ENCODE measurements at regions of chr2 and their contacts with region 1.

Region 1: DNA sequence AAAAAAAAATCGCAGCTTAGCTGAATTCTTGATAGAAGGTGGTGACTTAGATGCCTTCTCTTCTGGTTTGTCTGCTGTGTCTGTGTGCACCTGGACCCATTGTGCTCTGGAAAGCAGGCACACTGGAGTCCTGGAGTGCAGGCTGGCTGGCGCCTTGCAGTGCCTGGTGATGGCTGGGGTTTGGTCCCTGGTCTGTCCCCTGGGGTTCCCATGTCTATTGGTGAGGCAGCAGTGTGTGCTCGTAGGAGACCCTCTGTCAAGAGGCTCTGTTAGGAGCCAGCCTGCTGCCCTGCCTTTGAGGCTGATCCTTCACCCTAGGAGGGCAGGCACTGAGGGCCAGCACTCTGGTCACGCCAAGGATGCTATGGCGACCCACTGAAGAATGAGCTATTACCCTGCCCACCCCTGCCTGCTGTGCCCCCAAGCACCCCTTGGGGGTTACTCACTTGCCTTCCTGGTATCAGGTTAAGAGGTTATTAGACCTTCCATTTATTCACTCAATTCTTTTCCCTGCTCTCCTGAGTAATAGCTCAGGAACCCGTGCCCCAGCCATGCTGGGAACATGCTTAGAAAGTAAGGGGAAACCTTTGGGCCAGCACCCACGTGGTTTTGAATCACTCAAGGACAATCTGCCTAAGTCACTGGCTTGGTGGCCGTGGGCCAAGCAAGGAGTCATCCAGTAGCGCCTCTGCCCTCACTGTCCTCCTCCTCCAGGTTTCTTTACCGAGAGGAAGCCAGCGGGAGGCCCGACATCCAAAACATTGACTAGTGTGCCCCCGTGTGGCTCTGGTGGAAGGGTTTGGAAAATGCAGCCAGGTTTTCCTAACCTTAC is 284.5 kb downstream of the PRKCE start:
- DNase-seq: peak; percentile 99
- ATAC-seq: peak; percentile 62
- H3K4me3 ChIP-seq: no peak overlapping the region
- H3K27ac ChIP-seq: peak overlapping the region; percentile 67
- H3K4me1 ChIP-seq: peaks cover 42% of the 10 kb centered on the region
- H3K27me3 ChIP-seq: no peaks in the 10 kb centered on the region
- CTCF ChIP-seq: peak; percentile 87

Region 2: GRCh38 chr2:45177870-45178269 is 758.1 kb before region 1 on chr2:
- CTCF ChIA-PET with region 1: interaction called, 12 read pairs
- POLR2A ChIA-PET with region 1: no interaction called
- intact Hi-C with region 1: no loop called
- DNase-seq: peak; percentile 94
- ATAC-seq: 0 out of 2 replicates have a peak, but pooled peaks have one; percentile 8
- H3K4me3 ChIP-seq: no peak overlapping the region
- H3K27ac ChIP-seq: peak overlapping the region; percentile 95
- H3K4me1 ChIP-seq: peaks cover 54% of the 10 kb centered on the region
- H3K27me3 ChIP-seq: no peaks in the 10 kb centered on the region
- CTCF ChIP-seq: no peak

Region 3: DNA sequence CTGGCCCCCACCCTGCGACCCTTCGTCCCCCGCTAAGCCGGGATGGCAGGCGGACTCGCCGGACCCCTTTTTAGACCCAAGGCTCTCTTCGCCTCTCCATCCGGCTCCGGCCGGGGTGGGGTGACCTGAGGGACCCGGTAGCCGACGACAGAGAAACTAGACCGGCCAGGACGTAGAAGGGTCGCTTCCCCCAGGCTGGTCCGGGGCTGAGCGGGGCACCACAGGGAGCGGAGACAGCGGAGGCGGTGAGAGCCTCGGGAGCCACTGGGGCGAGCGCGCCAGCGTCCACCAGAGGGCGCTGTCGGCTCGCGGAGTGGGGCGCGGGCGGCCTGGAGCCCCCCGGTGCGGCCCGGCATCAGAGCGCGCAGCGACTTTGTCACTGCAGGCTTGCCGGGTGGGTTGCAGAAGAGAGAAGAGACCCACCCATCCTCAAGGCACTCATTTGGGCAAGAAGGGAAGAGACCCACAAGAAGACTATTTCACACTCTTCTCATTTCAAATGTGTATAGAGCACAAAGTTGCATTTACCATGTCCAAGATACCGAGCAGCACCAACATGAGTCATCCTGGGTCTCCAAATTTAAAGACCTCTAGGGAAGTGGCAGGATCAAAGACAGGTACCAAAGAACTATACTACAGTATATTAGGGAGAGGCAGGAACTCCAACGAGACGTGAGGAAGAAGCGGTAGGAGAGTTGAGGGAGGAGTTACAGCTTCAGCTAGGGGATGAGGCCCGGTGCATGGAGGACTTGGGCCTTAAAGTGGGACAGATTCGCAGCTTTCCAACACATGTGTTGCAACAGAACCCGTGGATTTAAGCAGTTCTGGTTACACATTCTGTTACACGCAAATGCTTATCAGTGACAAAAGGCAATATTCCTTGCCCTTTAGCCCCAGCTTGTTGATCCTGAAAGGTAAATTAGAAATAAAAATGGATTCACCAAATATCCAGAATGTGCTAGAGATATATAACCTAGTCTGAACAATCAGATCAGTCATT is 292.2 kb before region 1 on chr2:
- CTCF ChIA-PET with region 1: no interaction called
- POLR2A ChIA-PET with region 1: no interaction called
- intact Hi-C with region 1: loop called (anchors 1 kb)
- DNase-seq: peak; percentile 84
- ATAC-seq: peak; percentile 99
- H3K4me3 ChIP-seq: peak overlapping the region; percentile 80
- H3K27ac ChIP-seq: no peak overlapping the region
- H3K4me1 ChIP-seq: 0 out of 2 replicates have a peak, but pooled peaks cover 4% of the 10 kb centered on the region
- H3K27me3 ChIP-seq: no peaks in the 10 kb centered on the region
- CTCF ChIP-seq: peak; percentile 95

Region 4: GRCh38 chr2:45778720-45779171 is 157.3 kb before region 1 on chr2:
- CTCF ChIA-PET with region 1: interaction called, 10 read pairs
- POLR2A ChIA-PET with region 1: no interaction called
- intact Hi-C with region 1: loop called (anchors 1 kb)
- DNase-seq: peak; percentile 89
- ATAC-seq: peak; percentile 92
- H3K4me3 ChIP-seq: no peak overlapping the region
- H3K27ac ChIP-seq: no peak overlapping the region
- H3K4me1 ChIP-seq: no peaks in the 10 kb centered on the region
- H3K27me3 ChIP-seq: no peaks in the 10 kb centered on the region
- CTCF ChIP-seq: peak; percentile 83

Region 5: GRCh38 chr2:45964226-45964845 is 28.3 kb after region 1 on chr2:
- CTCF ChIA-PET with region 1: no interaction called
- POLR2A ChIA-PET with region 1: interaction called, 3 read pairs
- intact Hi-C with region 1: loop called (anchors 1 kb)
- DNase-seq: peak; percentile 100
- ATAC-seq: peak; percentile 89
- H3K4me3 ChIP-seq: no peak overlapping the region
- H3K27ac ChIP-seq: peak overlapping the region; percentile 65
- H3K4me1 ChIP-seq: peaks cover 51% of the 10 kb centered on the region
- H3K27me3 ChIP-seq: no peaks in the 10 kb centered on the region
- CTCF ChIP-seq: no peak

Measured in PC-3 (cell line).